GM18951 (cell line): ENCODE measurements at regions of chr6 and their contacts with region 1.

Region 1: GRCh38 chr6:75208298-75209183 is 2.7 kb upstream of the COL12A1 start:
- POLR2A ChIP-seq: no peak

Region 2: GRCh38 chr6:73747289-73747688 is 1461.3 kb before region 1 on chr6:
- in situ Hi-C with region 1: loop called (anchors 5 kb)
- POLR2A ChIP-seq: no peak

Region 3: DNA sequence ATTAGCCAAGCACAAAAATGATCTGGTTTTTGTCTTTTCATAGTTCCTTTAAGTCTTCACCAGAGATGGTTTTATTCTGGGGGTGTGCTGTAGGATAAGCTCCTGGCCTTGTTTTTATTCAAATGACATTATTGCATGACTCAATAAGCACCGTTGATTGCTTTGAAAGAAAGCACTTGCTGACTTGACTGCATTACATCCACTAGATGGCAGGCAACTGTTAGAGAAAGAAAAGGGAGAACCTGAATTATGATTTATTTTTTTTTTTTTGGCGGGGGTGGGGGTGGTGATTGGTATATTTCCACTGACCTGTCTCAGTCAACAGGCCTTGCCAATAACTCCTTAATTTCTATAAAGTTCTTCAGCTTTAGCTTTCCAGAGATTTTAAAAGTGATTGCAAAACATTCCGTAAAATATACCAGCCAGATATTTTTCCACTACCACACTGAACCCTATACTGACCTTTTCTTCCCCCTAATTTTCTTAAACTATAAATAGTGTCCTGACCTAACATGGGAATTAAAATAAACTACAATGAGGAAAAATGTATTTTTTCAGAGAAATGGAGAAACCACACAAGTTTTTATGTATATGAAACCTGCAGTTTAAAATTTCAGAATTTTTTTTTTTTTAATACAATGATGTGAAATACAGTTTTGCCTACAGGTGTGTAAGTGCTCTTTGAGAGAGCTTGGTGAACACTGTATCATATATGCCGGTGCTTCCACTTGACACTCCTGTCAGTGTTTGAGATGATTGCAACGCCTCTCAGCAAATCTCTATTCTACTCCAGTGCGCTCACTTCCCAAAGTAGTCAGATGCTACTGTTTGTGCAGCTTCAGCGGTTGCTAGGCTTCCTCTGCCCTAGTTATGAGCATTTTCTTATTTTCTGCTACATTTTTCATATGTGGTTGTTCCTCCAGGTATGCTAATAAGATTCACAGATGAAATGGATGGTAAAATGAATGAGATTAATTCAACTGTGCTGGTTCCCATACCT is 1238.3 kb before region 1 on chr6:
- in situ Hi-C with region 1: loop called (anchors 10 kb)
- POLR2A ChIP-seq: no peak

Region 4: DNA sequence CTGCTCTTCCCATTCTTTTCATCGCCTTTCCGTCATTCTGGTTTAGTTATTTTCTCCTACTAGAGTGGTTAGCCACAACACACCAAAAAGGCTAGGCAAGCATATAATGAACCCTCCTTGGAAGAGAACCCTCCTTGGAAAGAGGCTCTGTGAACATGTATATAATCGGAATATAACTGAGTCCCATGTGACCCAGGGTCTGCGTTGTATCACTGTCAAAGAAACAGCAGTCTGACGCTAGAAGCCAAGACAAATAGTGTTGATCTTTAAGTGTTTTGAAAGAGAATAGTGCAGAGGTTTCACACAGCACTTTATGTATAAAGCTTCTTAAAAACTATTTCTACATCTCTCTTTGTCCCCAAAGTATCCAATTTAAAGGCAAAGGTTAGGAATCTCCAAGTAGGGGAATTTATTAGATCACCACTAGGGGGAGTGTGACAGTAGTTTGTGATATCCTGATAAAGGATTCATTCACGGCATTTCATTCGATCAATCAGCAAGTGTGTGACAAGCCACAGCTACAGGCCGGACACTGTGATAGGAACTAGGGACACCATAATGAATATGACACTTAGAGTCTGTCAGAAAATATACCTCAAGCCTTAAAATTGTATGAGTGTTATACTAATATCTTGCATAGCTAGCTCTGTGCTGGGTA is 1117.3 kb before region 1 on chr6:
- in situ Hi-C with region 1: loop called (anchors 25 kb)
- POLR2A ChIP-seq: no peak